SK-N-SH (cell line): ENCODE measurements at regions of chr12 and their contacts with region 1.

Region 1: DNA sequence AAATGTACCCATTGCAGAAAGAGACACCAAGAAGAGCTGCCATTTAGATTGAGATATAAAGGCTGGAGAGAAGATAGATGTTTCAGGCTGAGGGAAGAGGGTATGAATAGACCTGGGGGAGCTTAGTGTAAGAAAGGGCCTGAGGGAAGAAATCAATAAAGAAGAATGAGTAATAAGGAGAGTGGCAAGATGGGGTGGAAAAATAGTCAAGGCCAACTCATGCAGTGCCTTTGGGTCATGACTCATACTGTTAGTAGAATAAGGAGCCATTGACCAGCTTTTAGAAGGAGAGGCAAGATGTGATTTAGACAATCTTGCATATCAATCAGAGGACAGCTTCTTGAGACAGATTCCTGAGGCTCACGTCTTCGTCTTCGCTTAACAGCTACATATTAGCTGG is 287.5 kb downstream of the DUSP6 start:
- DNase-seq: no peak
- H3K4me3 ChIP-seq: no peak overlapping the region
- H3K27ac ChIP-seq: peak overlapping the region in 1 of 2 experiments; percentile 26; a peak in 2 of 4 replicates
- H3K4me1 ChIP-seq: no peaks in the 10 kb centered on the region; a peak in 1 of 4 replicates
- H3K27me3 ChIP-seq: no peaks in the 10 kb centered on the region
- CTCF ChIP-seq: no peak
- EP300 ChIP-seq: no peak
- RAD21 ChIP-seq: no peak

Region 2: GRCh38 chr12:89051065-89051677 is 13.6 kb before region 1 on chr12:
- CTCF ChIA-PET with region 1: interaction called, 16 read pairs
- POLR2A ChIA-PET with region 1: no interaction called
- DNase-seq: peak; percentile 61
- H3K4me3 ChIP-seq: no peak overlapping the region
- H3K27ac ChIP-seq: peak overlapping the region in 1 of 2 experiments; percentile 0; a peak in 2 of 4 replicates
- H3K4me1 ChIP-seq: peaks cover 3 to 10% of the 10 kb centered on the region in 2 experiments; a peak in 3 of 4 replicates
- H3K27me3 ChIP-seq: no peaks in the 10 kb centered on the region
- CTCF ChIP-seq: peak; percentile 93
- EP300 ChIP-seq: 0 out of 4 replicates have a peak, but pooled peaks of 1 of the 2 experiments have one; percentile 35
- RAD21 ChIP-seq: peak; percentile 99